ENCODE measurements at regions of chr3 and their contacts with region 1.

Region 1: GRCh38 chr3:124928333-124929202 is 6.0 kb downstream of the MUC13 start:
- DNase-seq: peak; percentile 74 to 78
- H3K4me3 ChIP-seq: no peak overlapping the region
- H3K27ac ChIP-seq: no peak overlapping the region
- H3K4me1 ChIP-seq: no peaks in the 10 kb centered on the region
- H3K27me3 ChIP-seq: no peaks in the 10 kb centered on the region
- CTCF ChIP-seq: peak; percentile 44 to 78 (median 69)
- POLR2A ChIP-seq: no peak

Region 2: GRCh38 chr3:124707656-124708062 is 220.9 kb before region 1 on chr3:
- intact Hi-C with region 1: no loop called
- DNase-seq: no peak
- H3K4me3 ChIP-seq: no peak overlapping the region
- H3K27ac ChIP-seq: no peak overlapping the region
- H3K4me1 ChIP-seq: no peaks in the 10 kb centered on the region
- H3K27me3 ChIP-seq: no peaks in the 10 kb centered on the region
- CTCF ChIP-seq: no peak
- POLR2A ChIP-seq: no peak

Region 3: GRCh38 chr3:125003369-125003853 is 74.8 kb after region 1 on chr3:
- intact Hi-C with region 1: no loop called
- DNase-seq: peak; percentile 55 to 74
- H3K4me3 ChIP-seq: no peak overlapping the region
- H3K27ac ChIP-seq: peak overlapping the region; percentile 15 to 90 (median 76)
- H3K4me1 ChIP-seq: peaks cover 41 to 63% of the 10 kb centered on the region in 2 donors
- H3K27me3 ChIP-seq: no peaks in the 10 kb centered on the region
- CTCF ChIP-seq: peak in 1 of 6 experiments; percentile 10
- POLR2A ChIP-seq: peak in 1 of 2 donors; percentile 23

Region 4: GRCh38 chr3:125165189-125165947 is 236.8 kb after region 1 on chr3:
- intact Hi-C with region 1: loop called (anchors 10 kb)
- DNase-seq: peak; percentile 61 to 65
- H3K4me3 ChIP-seq: no peak overlapping the region
- H3K27ac ChIP-seq: peak overlapping the region in 1 of 3 donors; percentile 13
- H3K4me1 ChIP-seq: peaks cover 22 to 41% of the 10 kb centered on the region in 2 donors
- H3K27me3 ChIP-seq: no peaks in the 10 kb centered on the region
- CTCF ChIP-seq: peak; percentile 38 to 80 (median 70)
- POLR2A ChIP-seq: no peak

Region 5: GRCh38 chr3:125386811-125387210 is 458.2 kb after region 1 on chr3:
- intact Hi-C with region 1: no loop called
- DNase-seq: peak; percentile 72 to 73
- H3K4me3 ChIP-seq: no peak overlapping the region
- H3K27ac ChIP-seq: peak overlapping the region; percentile 61 to 80 (median 80)
- H3K4me1 ChIP-seq: peaks cover 16 to 22% of the 10 kb centered on the region in 2 donors
- H3K27me3 ChIP-seq: no peaks in the 10 kb centered on the region
- CTCF ChIP-seq: no peak
- POLR2A ChIP-seq: peak in 1 of 2 donors; percentile 45

Region 6: GRCh38 chr3:125437631-125438435 is 509.3 kb after region 1 on chr3:
- intact Hi-C with region 1: loop called (anchors 5 kb)
- DNase-seq: peak; percentile 61 to 68
- H3K4me3 ChIP-seq: no peak overlapping the region
- H3K27ac ChIP-seq: no peak overlapping the region
- H3K4me1 ChIP-seq: peaks cover 0 to 8% of the 10 kb centered on the region in 2 donors
- H3K27me3 ChIP-seq: no peaks in the 10 kb centered on the region
- CTCF ChIP-seq: peak; percentile 77 to 98 (median 87)
- POLR2A ChIP-seq: no peak

Region 7: GRCh38 chr3:125585595-125586223 is 657.1 kb after region 1 on chr3:
- intact Hi-C with region 1: loop called (anchors 5 kb)
- DNase-seq: peak; percentile 59 to 67
- H3K4me3 ChIP-seq: no peak overlapping the region
- H3K27ac ChIP-seq: no peak overlapping the region
- H3K4me1 ChIP-seq: peaks cover 7 to 15% of the 10 kb centered on the region in 2 donors
- H3K27me3 ChIP-seq: no peaks in the 10 kb centered on the region
- CTCF ChIP-seq: peak; percentile 55 to 91 (median 88)
- POLR2A ChIP-seq: no peak

Measured in thyroid gland (tissue), 4 donors.